ENCODE measurements at regions of chr17 and their contacts with region 1.

Region 1: DNA sequence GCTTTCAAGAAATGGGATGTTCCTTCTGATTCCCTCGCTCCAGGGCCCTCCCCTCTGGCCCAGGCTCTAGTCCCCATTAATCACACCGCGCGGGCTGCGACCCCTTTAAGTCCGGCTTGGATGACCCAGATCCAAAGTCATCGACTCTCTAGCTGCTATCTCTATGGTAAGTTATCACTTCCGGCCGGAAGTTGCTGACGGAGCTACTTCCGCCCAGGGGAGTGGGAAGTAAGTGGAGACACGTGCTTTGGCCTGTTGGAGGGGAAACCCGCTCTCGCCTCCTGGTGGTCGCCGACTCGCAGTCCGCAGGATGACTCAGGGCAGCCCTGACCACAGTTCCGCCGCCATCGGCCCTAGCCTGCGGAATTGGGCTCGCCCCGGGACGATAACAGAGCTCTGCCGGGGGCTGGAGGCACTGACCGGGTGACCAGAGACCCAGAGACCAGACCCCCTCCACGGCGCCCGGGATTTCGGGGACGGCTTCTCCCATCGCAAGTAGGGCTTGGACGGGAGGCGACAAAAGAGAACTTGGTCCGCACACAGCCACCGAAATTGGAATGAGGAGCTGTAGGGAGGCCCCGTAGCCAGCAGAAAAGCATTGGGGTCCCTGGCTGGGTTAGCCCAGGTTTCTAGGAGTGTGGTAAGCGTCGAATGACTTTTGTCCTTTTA is 52.2 kb upstream of the SEC14L1 start:
- DNase-seq: peak; percentile 96
- ATAC-seq: peak; percentile 97

Region 2: DNA sequence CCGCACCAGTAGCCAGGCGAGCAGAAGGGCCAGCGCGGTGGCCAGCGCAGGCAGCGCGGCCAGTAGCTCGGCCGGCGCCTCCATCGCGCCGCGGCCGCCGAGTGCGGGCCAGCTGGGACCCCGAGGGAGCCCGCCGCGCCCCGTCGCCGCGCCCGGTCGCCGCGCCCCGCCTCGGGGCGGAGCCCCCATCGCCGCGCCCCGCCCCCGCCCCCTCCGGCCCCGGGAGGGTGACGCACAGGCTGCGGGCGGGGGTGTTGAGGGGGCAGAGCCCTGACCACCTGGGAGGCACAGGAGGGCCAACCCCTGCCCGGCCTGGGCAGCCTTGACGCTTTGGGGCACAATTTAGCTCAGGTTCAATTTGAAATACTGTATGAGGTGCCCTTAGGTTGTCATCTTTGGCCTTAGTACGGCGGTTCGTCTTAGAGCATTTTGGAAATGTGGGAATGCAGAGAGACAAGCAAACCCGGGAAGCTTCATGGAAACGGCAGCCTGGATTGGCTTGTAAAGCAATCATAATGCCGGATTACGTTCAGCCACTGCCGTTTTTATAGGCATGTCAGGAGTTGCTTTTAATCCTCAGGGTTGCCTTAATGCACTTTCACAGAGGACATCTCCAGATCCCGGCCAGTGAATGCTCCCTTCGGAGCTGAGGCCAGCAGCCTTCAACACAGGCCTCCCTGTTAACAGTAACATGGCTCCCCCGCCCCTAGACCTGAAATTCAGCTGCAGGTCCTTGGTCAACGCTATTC is 377.6 kb before region 1 on chr17 and contains the start of gene MXRA7:
- intact Hi-C with region 1: no loop called
- DNase-seq: peak; percentile 86
- ATAC-seq: peak; percentile 72
- total RNA-seq, gene MXRA7: 185 TPM

Region 3: DNA sequence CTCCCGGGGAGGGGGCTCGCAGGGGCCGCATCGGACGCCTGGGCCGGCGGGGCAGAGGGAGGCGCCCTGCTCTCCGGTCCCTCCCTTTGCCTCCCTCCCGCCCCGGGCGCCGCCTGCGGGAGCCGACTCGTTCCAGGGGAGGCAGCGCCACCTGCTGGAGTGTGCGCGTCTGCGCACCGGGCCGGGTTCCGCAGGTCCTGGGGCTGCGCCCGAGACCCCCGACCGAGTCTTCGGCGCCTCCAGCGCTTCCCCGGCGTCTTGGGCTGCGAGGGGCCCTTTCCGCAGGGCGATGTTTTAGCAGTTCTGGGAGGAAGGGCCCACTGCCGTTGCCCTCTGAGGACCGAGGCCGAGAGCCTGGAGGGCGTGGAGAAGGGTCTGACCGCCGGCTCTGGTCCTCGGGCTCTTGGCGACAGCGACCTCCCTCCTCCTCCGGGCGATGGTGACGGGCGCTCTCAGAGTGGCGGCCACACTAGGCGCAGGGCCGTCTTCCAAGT is 158.5 kb after region 1 on chr17:
- intact Hi-C with region 1: loop called (anchors 5 kb)
- DNase-seq: peak; percentile 94
- ATAC-seq: peak; percentile 90

Region 4: GRCh38 chr17:77549726-77550366 is 461.3 kb after region 1 on chr17:
- intact Hi-C with region 1: loop called (anchors 5 kb)
- DNase-seq: no peak
- ATAC-seq: no peak

Measured in sciatic nerve (tissue), 2 donors.